K562 (cell line): ENCODE measurements at regions of chr7 and their contacts with region 1.

Region 1: GRCh38 chr7:100034871-100035510 is 14.6 kb upstream of the ZSCAN21 start:
- DNase-seq: no peak
- ATAC-seq: no peak
- H3K4me3 ChIP-seq: no peak overlapping the region
- H3K27ac ChIP-seq: no peak overlapping the region
- H3K4me1 ChIP-seq: no peaks in the 10 kb centered on the region
- H3K27me3 ChIP-seq: no peaks in the 10 kb centered on the region
- CTCF ChIP-seq: no peak
- EP300 ChIP-seq: no peak
- POLR2A ChIP-seq: no peak
- RAD21 ChIP-seq: no peak

Region 2: GRCh38 chr7:100003711-100004661 is 31.0 kb before region 1 on chr7:
- CTCF ChIA-PET with region 1: no interaction called
- POLR2A ChIA-PET with region 1: no interaction called
- in situ Hi-C with region 1: no loop called
- intact Hi-C with region 1: no loop called
- DNase-seq: no peak
- ATAC-seq: no peak; the same call in 1 of the 3 replicates
- H3K4me3 ChIP-seq: no peak overlapping the region
- H3K27ac ChIP-seq: no peak overlapping the region
- H3K4me1 ChIP-seq: peaks cover 0 to 4% of the 10 kb centered on the region in 2 experiments; a peak in 2 of 5 replicates
- H3K27me3 ChIP-seq: peaks cover 40 to 63% of the 10 kb centered on the region in 2 experiments
- CTCF ChIP-seq: no peak
- EP300 ChIP-seq: no peak
- POLR2A ChIP-seq: no peak
- RAD21 ChIP-seq: no peak

Region 3: DNA sequence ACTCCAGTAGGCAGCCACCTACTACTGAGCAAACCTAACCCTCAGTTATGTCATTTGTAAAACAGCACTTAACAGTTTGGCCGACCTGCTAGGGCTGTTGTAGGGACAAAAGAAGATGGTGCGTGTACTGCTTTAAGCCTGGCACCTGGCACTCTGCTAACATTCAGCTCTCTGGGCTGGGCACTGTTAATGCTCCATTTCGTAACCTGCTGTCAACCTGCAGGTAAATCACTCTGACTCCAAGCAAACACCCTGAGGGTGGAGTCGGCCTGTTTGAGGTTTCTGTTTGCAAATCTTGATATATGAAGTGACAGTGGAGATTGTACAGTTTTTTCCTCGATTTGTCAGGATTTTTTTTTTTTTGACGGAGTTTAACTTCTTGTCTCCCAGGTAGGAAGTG is 12.3 kb before region 1 on chr7:
- CTCF ChIA-PET with region 1: no interaction called
- POLR2A ChIA-PET with region 1: interaction called, 13 read pairs
- in situ Hi-C with region 1: no loop called
- intact Hi-C with region 1: no loop called
- DNase-seq: no peak
- ATAC-seq: no peak
- H3K4me3 ChIP-seq: no peak overlapping the region
- H3K27ac ChIP-seq: no peak overlapping the region
- H3K4me1 ChIP-seq: peaks cover 0 to 4% of the 10 kb centered on the region in 2 experiments; a peak in 1 of 5 replicates
- H3K27me3 ChIP-seq: no peaks in the 10 kb centered on the region
- CTCF ChIP-seq: no peak
- EP300 ChIP-seq: no peak
- POLR2A ChIP-seq: no peak
- RAD21 ChIP-seq: no peak